ENCODE measurements at regions of chr2 and their contacts with region 1.

Region 1: DNA sequence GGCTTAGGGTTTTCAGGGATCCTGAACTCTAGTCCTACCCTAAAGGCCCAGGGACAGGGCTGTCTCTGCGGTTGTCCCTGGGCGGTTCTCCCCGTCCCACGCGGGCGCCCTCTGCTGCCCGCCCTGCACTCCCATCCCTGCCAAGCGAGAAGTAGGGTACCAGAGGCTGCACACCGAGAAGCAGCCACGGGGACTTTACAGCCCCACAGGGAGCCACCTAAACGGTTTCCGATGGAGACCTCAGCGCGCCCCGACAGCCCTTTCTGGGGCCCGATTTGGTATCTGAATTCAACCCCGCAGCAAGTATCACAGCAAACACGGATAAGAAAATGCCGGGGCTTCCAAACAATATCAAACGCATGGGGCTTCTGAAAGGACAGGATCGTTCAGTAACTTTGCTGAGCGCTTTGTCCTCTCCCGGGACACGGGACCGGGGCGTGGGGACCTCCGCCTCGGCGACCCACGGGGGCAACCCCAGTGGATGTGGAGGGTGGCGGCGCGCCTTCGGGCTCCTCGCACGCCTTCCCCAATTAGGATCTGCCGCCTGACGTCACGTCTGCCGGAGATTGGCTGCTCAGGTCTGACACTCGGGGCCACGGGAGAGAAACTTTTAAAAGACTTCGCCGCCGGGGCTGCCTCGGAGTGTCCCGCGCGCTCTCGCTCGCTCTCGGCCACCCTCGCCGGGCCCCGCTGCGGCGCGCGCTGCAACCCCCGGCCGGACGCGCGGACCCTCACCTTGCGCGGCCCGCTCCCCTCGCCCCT is at the start of gene LTBP1:
- DNase-seq: peak; percentile 66
- H3K4me3 ChIP-seq: peak within 1 kb of the TSS; percentile 58 to 66 (median 63)
- H3K27ac ChIP-seq: no peak within 1 kb of the TSS
- H3K4me1 ChIP-seq: peaks cover 9% of the 10 kb centered on the region
- H3K27me3 ChIP-seq: no peaks in the 10 kb centered on the region
- CTCF ChIP-seq: peak; percentile 58 to 90
- total RNA-seq, gene LTBP1: 20.9 to 80.2 TPM

Region 2: DNA sequence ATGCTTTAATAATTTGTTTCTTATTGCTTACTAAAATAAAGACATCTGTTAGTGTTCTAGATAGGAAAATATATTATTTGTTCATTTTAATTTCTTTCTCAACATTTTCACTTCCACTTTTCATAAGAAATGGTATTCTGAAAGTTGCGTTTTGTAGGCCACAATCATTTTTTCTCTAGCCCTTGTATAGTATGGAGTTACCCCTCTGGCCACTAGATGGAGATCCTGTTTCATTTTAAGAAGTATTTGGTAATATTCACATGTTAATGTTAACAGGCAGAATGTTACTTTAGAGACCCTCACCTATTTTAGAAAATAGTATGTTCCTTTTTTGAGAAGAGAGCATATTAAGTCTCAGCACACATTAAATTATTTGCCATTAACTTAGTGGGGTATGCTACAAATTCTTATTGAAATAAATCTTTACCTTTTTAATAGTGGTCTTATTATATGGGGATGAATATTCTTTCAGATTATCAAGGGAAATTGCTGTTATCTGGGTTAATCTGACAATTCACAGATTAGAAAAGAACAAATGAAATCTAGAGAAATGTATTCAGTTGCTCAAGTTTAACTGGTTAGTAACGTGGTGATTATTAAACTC is 392.6 kb before region 1 on chr2:
- CTCF ChIA-PET with region 1: no interaction called
- dilution Hi-C with region 1: no loop called
- in situ Hi-C with region 1: no loop called
- intact Hi-C with region 1: loop called (anchors 5 kb)
- DNase-seq: peak; percentile 6
- H3K4me3 ChIP-seq: no peak overlapping the region
- H3K27ac ChIP-seq: no peak overlapping the region
- H3K4me1 ChIP-seq: no peaks in the 10 kb centered on the region
- H3K27me3 ChIP-seq: no peaks in the 10 kb centered on the region
- CTCF ChIP-seq: peak; percentile 53 to 72

Region 3: DNA sequence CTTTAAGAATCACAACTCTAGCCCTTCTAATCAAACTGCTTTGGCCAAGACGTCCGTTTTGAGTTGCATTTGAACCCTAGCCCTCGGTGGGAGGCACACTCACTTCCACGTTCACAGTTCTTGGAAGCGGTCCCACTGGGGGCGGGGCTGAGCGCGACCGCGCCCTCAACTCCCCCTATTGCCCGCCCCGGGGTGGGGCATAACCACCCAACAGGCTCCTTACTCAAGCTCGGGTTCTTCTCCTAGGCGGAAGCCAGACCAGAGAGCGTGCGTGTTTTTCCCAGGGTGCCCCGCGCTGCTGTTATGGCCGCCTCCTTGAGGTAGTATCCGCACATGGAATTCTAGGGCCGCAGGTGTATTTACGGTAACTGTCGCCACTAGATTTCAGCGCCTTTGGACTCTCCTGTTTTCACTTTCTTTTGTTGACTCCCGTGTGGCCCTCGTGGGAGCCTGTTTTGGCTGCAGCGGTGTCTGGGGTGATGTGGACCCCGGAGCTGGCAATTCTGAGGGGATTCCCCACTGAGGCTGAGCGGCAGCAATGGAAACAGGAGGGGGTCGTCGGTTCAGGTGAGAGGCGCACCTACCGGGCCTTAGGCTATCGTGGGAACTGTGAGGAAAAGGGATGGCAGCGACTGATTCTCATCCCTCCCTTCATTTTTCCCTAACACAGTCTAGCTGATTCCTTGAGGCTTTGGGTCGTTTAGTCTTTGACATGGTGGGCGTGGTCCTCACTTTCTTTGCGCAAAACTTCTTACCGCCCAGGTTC is 318.5 kb before region 1 on chr2 and contains the start of gene TTC27:
- CTCF ChIA-PET with region 1: no interaction called
- dilution Hi-C with region 1: no loop called
- in situ Hi-C with region 1: no loop called
- intact Hi-C with region 1: loop called (anchors 10 kb)
- DNase-seq: peak; percentile 93
- H3K4me3 ChIP-seq: peak within 1 kb of the TSS; percentile 78 to 96 (median 90)
- H3K27ac ChIP-seq: peak within 1 kb of the TSS; percentile 79
- H3K4me1 ChIP-seq: peaks cover 5% of the 10 kb centered on the region
- H3K27me3 ChIP-seq: no peaks in the 10 kb centered on the region
- CTCF ChIP-seq: no peak
- total RNA-seq, gene TTC27: 18.5 to 26.5 TPM

Region 4: DNA sequence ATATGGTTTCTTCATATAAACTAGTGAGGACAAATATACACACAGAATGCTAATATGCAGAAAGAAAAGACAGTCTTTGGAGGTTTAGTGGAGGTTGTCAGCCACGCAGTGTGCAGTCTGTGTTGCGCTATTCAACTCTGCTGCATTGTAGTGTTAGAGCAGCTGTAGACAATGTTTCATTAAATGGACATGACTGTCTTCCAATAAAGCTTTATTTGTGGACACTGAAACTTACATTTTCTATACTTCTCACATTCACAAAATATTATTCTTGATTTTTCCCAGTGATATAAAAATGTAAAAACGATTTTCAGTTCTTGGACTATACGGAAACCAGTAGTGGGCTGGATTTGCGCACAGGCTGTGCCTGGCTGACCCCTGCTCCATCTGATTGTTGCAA is 305.3 kb before region 1 on chr2:
- CTCF ChIA-PET with region 1: no interaction called
- dilution Hi-C with region 1: no loop called
- in situ Hi-C with region 1: no loop called
- intact Hi-C with region 1: no loop called
- DNase-seq: no peak
- H3K4me3 ChIP-seq: no peak overlapping the region
- H3K27ac ChIP-seq: no peak overlapping the region
- H3K4me1 ChIP-seq: no peaks in the 10 kb centered on the region
- H3K27me3 ChIP-seq: no peaks in the 10 kb centered on the region
- CTCF ChIP-seq: no peak

Region 5: DNA sequence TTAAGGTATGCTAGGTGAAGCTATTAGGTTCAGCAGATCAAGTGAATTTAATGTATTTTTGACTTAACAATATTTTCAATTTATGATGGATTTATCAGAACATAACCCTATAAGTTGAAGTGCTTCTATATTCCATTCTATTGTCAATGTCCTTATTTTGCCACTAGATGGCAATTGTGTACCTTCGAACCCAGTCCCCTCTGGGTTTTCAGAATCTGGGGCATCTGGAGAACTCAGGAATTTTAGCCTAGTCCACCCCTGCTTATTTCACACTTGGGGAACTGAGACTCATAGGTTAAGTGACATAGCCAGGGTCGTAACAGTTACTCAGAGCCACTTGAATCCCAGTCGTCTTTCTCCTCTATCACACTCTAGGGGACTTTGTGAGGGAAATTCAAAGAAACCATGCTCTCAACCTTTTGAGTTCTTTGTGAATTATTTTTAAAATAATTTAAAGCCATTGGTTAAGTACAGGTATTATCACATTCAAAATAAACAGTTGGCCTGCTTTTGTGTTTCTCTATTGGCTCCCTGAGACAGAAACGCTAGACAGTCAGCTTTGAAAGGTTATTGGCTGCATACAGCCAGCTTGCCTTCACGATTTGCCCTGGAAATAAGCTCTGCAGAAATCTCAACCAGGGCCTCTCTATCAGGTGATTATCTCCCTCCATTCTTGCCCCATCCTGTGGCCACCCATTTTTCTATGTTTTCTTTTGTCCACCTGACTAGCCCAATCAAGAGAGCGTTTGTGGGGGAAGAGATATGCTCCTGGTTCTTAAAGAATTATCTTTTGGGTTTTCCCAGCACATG is 173.7 kb before region 1 on chr2:
- CTCF ChIA-PET with region 1: no interaction called
- dilution Hi-C with region 1: no loop called
- in situ Hi-C with region 1: loop called (anchors 10 kb)
- intact Hi-C with region 1: loop called (anchors 1 kb)
- DNase-seq: peak; percentile 19
- H3K4me3 ChIP-seq: no peak overlapping the region
- H3K27ac ChIP-seq: no peak overlapping the region
- H3K4me1 ChIP-seq: no peaks in the 10 kb centered on the region
- H3K27me3 ChIP-seq: no peaks in the 10 kb centered on the region
- CTCF ChIP-seq: peak; percentile 36 to 66

Region 6: DNA sequence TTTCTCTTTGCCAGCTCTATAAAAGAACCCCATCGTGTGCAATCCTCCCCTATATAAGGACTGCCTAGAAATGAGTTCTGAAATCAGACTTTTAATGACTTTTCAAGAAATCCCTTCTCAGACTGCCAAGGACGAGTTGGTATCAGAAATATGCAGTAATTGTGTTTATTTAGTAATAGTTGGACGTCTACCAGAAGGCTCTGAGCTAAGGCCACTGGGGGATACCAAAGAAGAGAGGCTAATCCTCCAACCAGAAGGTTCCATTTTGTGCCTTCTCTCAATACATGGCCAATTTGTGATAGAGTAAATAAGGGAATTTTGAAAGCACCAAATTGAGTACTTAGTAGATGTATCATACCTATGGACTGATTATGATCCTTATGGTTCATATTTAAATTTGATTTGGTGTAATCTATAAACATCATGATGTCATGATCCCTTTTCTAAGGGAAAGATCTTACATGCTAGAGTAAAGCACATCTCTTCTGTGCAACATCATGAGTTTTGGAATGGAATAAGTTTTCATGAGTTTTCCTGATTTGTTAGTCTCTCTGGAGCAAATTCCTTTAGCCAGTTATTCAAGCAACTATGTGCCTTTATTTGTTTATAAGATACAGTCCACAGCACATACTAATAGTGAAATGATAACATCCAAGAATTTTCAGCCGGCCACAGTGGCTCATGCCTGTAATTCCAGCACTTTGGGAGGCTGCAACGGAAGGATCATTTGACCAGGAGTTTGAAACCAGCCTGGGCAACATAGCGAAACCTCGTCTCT is 82.0 kb before region 1 on chr2:
- CTCF ChIA-PET with region 1: interaction called, 3 read pairs
- dilution Hi-C with region 1: no loop called
- in situ Hi-C with region 1: no loop called
- intact Hi-C with region 1: loop called (anchors 5 kb)
- DNase-seq: no peak
- H3K4me3 ChIP-seq: no peak overlapping the region
- H3K27ac ChIP-seq: no peak overlapping the region
- H3K4me1 ChIP-seq: peaks cover 8% of the 10 kb centered on the region
- H3K27me3 ChIP-seq: no peaks in the 10 kb centered on the region
- CTCF ChIP-seq: no peak

Region 7: DNA sequence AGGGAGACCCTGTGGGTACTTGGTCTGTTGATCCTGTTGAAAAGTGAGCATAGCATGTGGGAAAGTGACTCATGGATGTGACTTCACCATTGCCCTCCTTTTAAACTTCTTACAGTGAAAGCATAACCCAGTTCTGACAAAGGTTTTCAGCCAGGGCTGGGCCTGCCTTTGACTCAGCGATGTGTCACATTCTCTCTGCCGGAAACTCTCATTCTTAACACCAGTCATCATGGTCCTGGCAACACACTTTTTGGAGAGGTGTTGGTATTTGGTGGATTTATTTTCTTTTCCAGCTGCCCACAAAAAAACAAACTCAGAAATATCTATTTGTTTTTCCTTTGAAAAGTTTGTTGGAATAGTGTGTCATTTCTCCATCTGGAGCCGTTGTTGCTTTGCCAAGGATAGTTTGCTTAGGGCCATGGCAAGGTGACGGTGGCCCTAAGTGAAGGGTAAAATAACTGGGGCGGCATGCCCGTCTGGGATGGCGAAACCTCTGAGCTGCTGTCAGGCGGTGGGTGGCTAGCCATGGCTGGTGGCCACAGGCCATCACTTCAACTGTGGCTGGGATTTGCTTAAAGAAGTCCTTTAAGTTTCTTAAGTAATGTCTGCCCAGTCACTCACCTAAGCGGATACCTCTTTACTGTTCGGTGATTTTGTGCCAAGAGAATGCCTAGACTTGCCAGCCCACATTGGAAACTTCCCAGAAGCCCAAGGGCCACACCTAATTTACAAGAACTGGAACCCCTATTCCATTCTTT is 123.6 kb after region 1 on chr2:
- CTCF ChIA-PET with region 1: no interaction called
- dilution Hi-C with region 1: no loop called
- in situ Hi-C with region 1: no loop called
- intact Hi-C with region 1: loop called (anchors 1 kb)
- DNase-seq: peak; percentile 98
- H3K4me3 ChIP-seq: peak overlapping the region; percentile 18 to 37 (median 21)
- H3K27ac ChIP-seq: peak overlapping the region; percentile 99
- H3K4me1 ChIP-seq: peaks cover 43% of the 10 kb centered on the region
- H3K27me3 ChIP-seq: no peaks in the 10 kb centered on the region
- CTCF ChIP-seq: no peak

Region 8: GRCh38 chr2:33380001-33380609 is 433.6 kb after region 1 on chr2:
- CTCF ChIA-PET with region 1: no interaction called
- dilution Hi-C with region 1: no loop called
- in situ Hi-C with region 1: no loop called
- intact Hi-C with region 1: loop called (anchors 5 kb)
- DNase-seq: no peak
- H3K4me3 ChIP-seq: no peak overlapping the region
- H3K27ac ChIP-seq: no peak overlapping the region
- H3K4me1 ChIP-seq: no peaks in the 10 kb centered on the region
- H3K27me3 ChIP-seq: no peaks in the 10 kb centered on the region
- CTCF ChIP-seq: peak; percentile 66 to 89

Measured in mammary epithelial cell (primary cell).